Heart left ventricle (tissue), 16 donors: ENCODE measurements at regions of chr1 and their contacts with region 1.

Region 1: DNA sequence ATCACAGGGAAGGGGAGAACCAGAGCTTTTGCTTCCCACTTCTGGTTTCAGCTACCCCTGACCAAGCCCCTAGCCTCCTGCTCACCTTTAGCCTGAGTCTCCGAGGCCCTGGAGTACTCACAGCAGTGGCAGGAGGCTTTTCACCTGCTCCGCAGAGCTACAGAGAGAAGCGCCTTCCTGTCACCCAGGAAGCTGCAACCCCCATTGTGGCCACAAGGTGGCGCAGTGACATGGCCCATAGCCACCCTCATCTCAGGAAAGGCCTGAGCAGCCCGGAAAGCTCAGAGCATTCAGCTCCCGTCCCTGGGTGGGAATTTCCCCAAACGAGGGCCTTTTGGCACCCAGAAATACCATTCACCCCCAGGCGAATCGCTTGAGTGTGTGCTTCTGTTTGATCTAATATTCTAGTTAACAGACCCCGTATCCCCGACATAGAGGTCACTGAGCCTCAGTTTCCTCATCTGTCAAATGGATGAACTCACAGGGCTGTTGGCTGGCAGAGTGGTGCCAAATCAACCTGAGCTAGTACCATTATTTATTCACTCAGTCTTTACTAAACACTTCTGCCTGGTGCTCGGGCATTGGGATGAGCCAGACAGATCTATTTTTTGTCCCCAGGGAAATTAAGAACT is 25.3 kb downstream of the A3GALT2 start:
- DNase-seq: peak; percentile 78 to 92 (median 84)
- ATAC-seq: peak; percentile 72 to 88 (median 80)
- H3K4me3 ChIP-seq: no peak overlapping the region
- H3K27ac ChIP-seq: peak overlapping the region in 5 of 12 donors; percentile 6 to 46 (median 23)
- H3K4me1 ChIP-seq: peaks cover 0 to 25% (median 11%) of the 10 kb centered on the region in 12 donors
- H3K27me3 ChIP-seq: no peaks in the 10 kb centered on the region
- CTCF ChIP-seq: peak in 11 of 12 donors; percentile 90 to 100 (median 97)
- POLR2A ChIP-seq: no peak

Region 2: GRCh38 chr1:33219881-33220661 is 75.5 kb before region 1 on chr1:
- intact Hi-C with region 1: loop called in 8 of 10 experiments (anchors 2 to 10 kb)
- DNase-seq: no peak
- ATAC-seq: peak in 2 of 4 donors; percentile 16 to 44
- H3K4me3 ChIP-seq: no peak overlapping the region
- H3K27ac ChIP-seq: peak overlapping the region in 1 of 12 donors; percentile 16
- H3K4me1 ChIP-seq: peaks cover 0 to 26% (median 0%) of the 10 kb centered on the region in 12 donors
- H3K27me3 ChIP-seq: no peaks in the 10 kb centered on the region
- CTCF ChIP-seq: no peak
- POLR2A ChIP-seq: no peak

Region 3: GRCh38 chr1:33256701-33257399 is 38.7 kb before region 1 on chr1:
- intact Hi-C with region 1: loop called in 1 of 10 experiments (anchors 5 kb)
- DNase-seq: peak; percentile 53 to 77 (median 58)
- ATAC-seq: peak in 3 of 4 donors; percentile 21 to 50 (median 40)
- H3K4me3 ChIP-seq: peak overlapping the region; percentile 35 to 99 (median 80)
- H3K27ac ChIP-seq: peak overlapping the region; percentile 51 to 94 (median 88)
- H3K4me1 ChIP-seq: peaks cover 18 to 56% (median 44%) of the 10 kb centered on the region in 12 donors
- H3K27me3 ChIP-seq: no peaks in the 10 kb centered on the region
- CTCF ChIP-seq: no peak
- POLR2A ChIP-seq: no peak

Region 4: GRCh38 chr1:33268927-33269610 is 26.5 kb before region 1 on chr1:
- intact Hi-C with region 1: no loop called
- DNase-seq: no peak
- ATAC-seq: peak in 3 of 4 donors; percentile 11 to 57 (median 42)
- H3K4me3 ChIP-seq: no peak overlapping the region
- H3K27ac ChIP-seq: peak overlapping the region in 11 of 12 donors; percentile 13 to 67 (median 48)
- H3K4me1 ChIP-seq: peaks cover 0 to 86% (median 51%) of the 10 kb centered on the region in 12 donors
- H3K27me3 ChIP-seq: no peaks in the 10 kb centered on the region
- CTCF ChIP-seq: no peak
- POLR2A ChIP-seq: no peak

Region 5: GRCh38 chr1:33455539-33456501 is 160.3 kb after region 1 on chr1:
- intact Hi-C with region 1: loop called in 1 of 10 experiments (anchors 5 kb)
- DNase-seq: peak in 4 of 5 donors; percentile 51 to 64 (median 58)
- ATAC-seq: peak; percentile 68 to 89 (median 87)
- H3K4me3 ChIP-seq: no peak overlapping the region
- H3K27ac ChIP-seq: peak overlapping the region in 10 of 12 donors; percentile 11 to 66 (median 43)
- H3K4me1 ChIP-seq: peaks cover 0 to 47% (median 19%) of the 10 kb centered on the region in 12 donors
- H3K27me3 ChIP-seq: no peaks in the 10 kb centered on the region
- CTCF ChIP-seq: peak; percentile 43 to 69 (median 54)
- POLR2A ChIP-seq: no peak

Region 6: DNA sequence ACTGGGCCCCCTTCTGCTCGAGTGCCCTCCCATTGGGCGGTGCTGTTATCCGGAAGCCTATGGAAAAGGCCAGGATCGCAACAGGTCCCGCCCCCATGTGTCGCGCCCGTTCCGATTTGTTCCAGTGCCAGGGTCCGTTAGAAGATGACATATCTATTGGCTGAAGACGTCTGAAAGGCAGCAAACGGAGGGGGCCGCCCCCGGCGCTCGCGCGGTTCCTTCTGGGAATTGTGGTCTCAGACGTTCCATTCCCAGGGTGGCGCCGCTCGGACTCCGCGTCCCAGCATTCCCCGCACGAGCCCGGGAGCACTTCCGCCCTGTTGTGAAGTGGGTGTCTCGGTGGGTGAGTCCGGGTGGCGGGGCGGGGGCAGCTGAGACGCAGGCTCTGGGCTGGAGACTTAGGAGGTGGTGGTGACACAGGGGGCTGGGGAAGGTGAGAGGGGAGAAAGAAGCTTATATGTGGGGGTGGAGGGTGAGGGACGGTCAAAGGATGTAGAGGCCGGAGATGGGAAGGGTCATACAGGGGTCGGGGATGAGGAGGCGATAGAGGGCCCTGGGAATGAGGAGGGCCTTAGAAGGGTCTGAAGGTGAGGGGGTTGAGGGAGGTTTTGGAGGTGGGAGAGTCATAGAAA is 176.9 kb after region 1 on chr1 and contains the start of gene ZSCAN20:
- intact Hi-C with region 1: loop called (anchors 1 to 5 kb)
- DNase-seq: peak; percentile 98 to 99 (median 98)
- ATAC-seq: peak; percentile 90 to 94 (median 94)
- H3K4me3 ChIP-seq: peak within 1 kb of the TSS; percentile 42 to 74 (median 67)
- H3K27ac ChIP-seq: peak within 1 kb of the TSS; percentile 76 to 90 (median 86)
- H3K4me1 ChIP-seq: peaks cover 3 to 50% (median 34%) of the 10 kb centered on the region in 12 donors
- H3K27me3 ChIP-seq: no peaks in the 10 kb centered on the region
- CTCF ChIP-seq: no peak
- POLR2A ChIP-seq: peak in 1 of 2 donors; percentile 48
- total RNA-seq, gene ZSCAN20: 3.3 to 8.8 (median 6.4) TPM

Region 7: GRCh38 chr1:33606272-33606671 is 310.7 kb after region 1 on chr1:
- intact Hi-C with region 1: loop called in 7 of 10 experiments (anchors 5 to 10 kb)
- DNase-seq: peak in 4 of 5 donors; percentile 62 to 77 (median 73)
- ATAC-seq: peak; percentile 70 to 88 (median 76)
- H3K4me3 ChIP-seq: no peak overlapping the region
- H3K27ac ChIP-seq: peak overlapping the region in 9 of 12 donors; percentile 34 to 88 (median 76)
- H3K4me1 ChIP-seq: peaks cover 0 to 35% (median 8%) of the 10 kb centered on the region in 12 donors
- H3K27me3 ChIP-seq: no peaks in the 10 kb centered on the region
- CTCF ChIP-seq: no peak
- POLR2A ChIP-seq: no peak